ENCODE measurements at regions of chr2 and their contacts with region 1.

Region 1: DNA sequence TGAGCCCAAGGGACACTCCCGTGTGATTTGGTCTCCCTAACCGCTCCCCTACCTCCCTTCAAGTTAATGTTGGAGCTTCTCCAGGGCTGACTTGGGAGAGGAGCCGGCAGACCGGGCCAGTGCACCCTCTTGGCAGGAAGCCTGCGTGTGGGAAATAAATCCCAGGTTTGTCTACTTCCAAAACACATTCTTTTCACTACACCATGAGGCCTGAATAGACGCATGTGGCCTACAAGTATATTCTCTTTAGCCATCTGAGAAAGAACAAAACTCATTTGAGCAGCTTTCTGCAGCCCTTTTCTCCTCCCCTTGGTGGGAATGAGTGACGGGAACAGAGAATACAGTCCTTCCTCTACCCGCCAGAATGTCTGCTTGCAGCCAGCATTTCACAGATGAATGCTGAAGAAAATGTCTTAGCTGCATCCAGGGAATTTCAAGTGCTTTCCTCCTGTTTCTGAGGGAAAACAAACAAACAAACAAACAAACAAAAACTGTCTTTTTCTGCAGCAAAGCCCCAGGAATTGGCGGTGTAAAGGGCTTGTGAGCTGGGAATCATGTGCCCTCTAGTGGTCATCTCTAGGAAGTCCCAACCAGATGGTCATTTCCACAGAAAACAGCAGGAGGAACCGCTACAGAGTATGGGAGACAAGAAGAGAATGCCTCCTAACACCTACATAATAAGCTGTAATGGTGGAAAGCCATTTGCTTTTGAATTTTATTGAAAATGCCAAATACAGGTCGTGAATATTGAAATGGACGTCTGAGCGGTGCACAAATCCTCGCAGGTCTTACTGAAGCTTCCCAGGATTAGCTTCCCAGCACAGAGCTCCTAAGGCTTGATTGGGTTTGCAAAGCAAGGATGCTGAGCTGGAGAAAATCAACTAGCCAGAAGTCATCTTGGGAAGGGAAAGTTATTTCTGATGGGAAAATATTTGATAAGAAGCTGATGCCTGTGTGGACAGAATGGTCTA is 41.2 kb upstream of the DAPL1 start:
- DNase-seq: peak; percentile 43
- ATAC-seq: peak; percentile 93

Region 2: GRCh38 chr2:158034199-158034866 is 719.6 kb before region 1 on chr2:
- intact Hi-C with region 1: loop called (anchors 5 kb)
- DNase-seq: no peak
- ATAC-seq: peak; percentile 63

Region 3: GRCh38 chr2:158273414-158274190 is 480.3 kb before region 1 on chr2:
- intact Hi-C with region 1: no loop called
- DNase-seq: no peak
- ATAC-seq: no peak

Region 4: GRCh38 chr2:158464426-158465281 is 289.3 kb before region 1 on chr2:
- intact Hi-C with region 1: loop called (anchors 10 kb)
- DNase-seq: no peak
- ATAC-seq: no peak

Region 5: DNA sequence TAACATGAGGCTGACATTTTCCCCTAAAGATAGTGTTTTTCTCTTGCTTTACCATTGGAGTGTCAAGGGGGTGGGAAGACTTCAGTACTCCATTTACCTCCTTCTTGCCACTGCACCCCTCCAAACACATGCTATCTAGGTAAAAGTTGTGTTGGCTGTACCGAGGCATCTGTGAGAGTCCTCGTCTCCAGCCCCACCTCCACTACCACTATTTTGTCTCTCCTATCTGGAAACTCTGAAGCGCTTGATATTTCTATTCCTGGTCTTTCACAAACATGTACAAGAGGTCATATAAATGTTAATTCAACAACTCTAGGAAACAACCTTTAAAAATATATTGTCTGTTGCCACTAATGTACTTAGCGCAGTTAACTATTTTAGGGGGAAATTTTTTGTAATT is 164.6 kb before region 1 on chr2:
- intact Hi-C with region 1: no loop called
- DNase-seq: no peak
- ATAC-seq: peak; percentile 51

Region 6: GRCh38 chr2:158610059-158610458 is 143.9 kb before region 1 on chr2:
- intact Hi-C with region 1: no loop called
- DNase-seq: no peak
- ATAC-seq: no peak

Region 7: GRCh38 chr2:158795195-158795924 is 41.4 kb after region 1 on chr2 and contains the start of gene DAPL1:
- intact Hi-C with region 1: no loop called
- DNase-seq: no peak
- ATAC-seq: no peak
- total RNA-seq, gene DAPL1: not detected